Left cardiac atrium (tissue), 4 donors: ENCODE measurements at regions of chr7 and their contacts with region 1.

Region 1: DNA sequence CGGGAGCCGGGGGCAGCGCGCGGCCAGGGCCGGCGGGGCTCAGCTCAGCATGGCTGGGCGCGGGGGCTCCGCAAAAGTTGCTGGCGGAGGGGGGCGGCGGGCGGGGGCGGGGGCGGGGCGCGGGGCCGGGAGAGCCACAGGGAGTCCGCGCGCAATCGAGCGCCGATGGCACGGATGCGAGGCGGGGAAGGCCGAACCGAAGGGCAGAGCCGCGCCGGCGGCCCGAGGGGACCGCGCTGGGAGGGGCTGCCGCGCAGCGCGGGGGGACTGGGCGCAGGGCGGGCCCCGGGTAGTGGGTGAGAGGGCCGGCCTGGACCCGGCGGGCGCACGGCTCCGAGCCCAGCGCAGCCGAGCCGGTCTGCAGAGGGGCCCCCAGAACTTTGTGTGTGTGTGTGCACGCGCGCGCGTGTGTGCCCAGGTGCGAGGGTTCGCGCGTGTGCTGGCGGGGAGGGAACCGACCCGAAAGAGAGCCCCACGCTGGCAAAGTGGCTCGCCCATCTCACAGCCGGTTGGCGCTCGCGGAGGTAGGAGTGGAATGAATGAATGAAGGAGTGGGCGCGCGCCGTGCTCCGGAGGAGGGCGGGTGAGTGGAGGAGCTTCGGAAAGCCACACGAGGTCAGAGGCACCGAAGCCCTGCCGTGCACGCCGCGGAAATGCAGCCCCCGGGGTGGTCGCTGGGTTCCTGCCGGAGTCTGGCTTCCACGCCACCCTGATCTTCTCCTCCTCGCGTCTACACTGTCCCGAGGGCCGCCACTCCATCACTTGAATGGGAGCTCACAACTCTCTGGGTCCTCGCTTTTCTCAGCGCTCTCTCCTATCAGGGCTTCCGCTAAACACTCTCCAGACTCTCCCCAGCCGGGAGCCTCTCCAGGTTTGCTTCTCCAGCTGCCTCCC is at the start of gene HIPK2:
- DNase-seq: peak; percentile 89
- ATAC-seq: peak; percentile 88 to 91
- total RNA-seq, gene HIPK2: 123 to 139 TPM

Region 2: DNA sequence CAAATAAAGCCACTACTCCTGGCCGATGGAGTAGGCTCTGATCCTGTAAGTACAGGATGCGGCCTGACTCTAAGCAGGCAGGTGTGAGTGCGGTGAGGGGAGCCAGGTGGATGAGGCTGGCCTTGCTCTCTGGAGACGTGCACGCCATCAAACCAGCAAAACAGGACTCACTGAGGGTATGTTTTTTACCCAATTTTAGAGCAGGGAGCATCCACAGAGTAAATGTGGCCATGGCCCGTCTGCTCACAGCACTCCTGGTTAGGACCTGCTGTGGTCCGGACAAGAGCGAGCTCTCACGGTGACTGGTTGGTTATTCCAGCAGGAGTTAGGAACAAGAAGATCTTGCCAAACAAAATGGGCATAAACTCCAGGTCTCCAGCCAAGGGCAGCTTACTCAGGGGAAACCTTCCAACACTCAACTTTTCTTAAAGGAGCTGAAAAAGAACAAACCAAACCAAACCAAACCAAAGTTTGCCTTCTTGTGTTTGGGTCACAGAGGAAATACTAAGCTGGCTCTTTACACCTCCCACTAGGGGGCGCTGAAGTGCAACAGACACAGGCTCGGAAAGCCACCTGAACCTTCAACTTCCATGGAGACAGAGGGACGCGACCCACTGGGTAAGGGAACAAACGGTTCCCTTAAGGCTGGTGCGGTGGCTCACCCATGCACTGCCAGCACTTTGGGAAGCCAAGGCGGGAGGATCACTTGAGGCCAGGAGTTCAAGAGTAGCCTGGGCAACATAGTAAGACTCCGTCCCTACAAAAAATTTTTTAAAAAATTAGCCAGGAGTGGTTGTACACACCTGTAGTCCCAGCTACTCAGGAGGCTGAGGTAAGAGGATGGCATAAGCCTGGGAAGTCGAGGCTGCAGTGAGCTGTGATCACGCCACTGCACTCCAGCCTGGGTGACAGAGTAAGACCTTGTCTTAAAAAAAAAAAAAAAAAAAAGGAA is 132.3 kb before region 1 on chr7:
- intact Hi-C with region 1: loop called (anchors 1 to 5 kb)
- DNase-seq: peak; percentile 86
- ATAC-seq: peak; percentile 57 to 62

Region 3: DNA sequence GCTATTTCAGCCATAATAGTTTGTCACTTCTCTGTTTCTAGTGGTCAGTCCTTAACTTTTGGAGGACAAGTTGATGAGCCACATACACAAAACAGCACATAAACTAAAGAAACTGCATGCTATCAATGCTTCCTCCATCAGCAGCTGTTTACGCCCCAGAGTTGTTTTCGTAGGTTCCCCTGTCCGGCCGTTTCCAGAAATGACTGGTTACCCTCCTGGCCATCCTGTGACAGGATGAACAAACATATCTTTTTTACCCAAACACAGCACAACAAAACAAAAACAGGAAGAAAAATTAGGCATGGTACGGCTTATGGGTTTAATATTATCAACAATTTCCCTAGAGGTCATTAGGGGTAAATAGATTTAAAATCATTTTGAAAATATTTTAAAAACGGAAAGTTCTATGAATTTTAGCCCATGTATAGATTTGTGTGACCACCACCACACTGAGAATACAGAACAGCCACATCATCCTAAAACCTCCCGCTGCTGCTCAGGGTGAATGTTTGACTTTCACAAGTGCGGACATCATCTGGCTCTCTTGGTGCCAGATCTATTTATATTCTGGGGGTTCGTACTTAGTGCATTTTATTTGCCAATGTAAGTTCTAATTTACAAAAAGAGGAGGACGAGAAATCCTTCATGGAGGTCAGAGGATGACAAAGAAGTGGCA is 75.2 kb before region 1 on chr7:
- intact Hi-C with region 1: loop called in 1 of 2 experiments (anchors 10 kb)
- DNase-seq: no peak
- ATAC-seq: peak; percentile 47 to 64

Region 4: GRCh38 chr7:139725077-139725476 is 53.1 kb before region 1 on chr7:
- intact Hi-C with region 1: loop called in 1 of 2 experiments (anchors 10 kb)
- DNase-seq: no peak
- ATAC-seq: peak in 1 of 2 donors; percentile 29

Region 5: DNA sequence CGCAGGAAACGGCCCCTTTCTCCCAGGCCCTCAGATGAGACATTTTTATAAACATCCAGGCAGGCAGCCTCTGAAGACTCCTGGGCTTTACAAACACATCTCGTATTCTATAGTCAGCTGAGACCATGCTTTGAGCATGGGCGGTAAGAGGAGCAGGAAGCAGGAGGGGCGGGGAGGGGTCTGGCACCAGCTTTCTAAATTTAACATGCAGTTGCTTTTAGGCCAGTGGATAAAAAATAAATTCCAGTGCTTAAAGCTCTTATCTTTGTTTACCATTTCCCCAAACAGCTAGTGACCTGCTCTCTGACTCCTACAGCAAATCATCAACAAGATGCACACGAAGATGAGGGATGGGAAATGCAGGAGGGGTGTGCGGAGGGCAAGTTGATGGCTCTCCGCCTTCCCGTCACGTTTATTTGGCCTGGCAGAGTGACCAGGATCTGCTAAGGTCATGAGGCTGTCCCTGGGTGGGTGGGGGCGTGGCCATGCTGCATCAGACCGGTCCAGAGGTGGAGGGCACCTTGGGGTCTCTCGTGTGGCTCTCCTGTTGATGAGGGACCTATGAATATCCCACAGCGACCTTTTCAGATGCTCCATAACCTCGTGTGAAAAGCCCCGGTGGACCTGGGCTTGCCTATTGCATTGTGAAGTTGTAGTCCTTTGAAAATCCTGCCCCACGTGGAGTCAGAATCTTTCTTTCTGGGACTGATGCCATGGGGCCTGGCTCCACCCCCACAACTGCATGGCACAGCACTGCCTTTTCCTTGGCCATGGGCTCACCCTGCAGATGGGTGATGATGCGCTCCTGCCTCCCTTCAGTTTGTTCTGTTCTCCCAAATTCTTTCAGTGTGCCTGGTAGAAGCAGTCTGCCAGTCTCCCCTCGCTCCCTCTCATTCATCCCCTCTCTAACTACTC is 217.1 kb after region 1 on chr7:
- intact Hi-C with region 1: loop called (anchors 5 to 10 kb)
- DNase-seq: peak; percentile 49
- ATAC-seq: peak; percentile 87 to 89

Region 6: GRCh38 chr7:140079121-140079536 is 300.9 kb after region 1 on chr7:
- intact Hi-C with region 1: no loop called
- DNase-seq: no peak
- ATAC-seq: peak in 1 of 2 donors; percentile 30

Region 7: GRCh38 chr7:140435252-140435895 is 657.2 kb after region 1 on chr7:
- intact Hi-C with region 1: no loop called
- DNase-seq: no peak
- ATAC-seq: peak in 1 of 2 donors; percentile 42